Panc1 (cell line): ENCODE measurements at regions of chr1 and their contacts with region 1.

Region 1: DNA sequence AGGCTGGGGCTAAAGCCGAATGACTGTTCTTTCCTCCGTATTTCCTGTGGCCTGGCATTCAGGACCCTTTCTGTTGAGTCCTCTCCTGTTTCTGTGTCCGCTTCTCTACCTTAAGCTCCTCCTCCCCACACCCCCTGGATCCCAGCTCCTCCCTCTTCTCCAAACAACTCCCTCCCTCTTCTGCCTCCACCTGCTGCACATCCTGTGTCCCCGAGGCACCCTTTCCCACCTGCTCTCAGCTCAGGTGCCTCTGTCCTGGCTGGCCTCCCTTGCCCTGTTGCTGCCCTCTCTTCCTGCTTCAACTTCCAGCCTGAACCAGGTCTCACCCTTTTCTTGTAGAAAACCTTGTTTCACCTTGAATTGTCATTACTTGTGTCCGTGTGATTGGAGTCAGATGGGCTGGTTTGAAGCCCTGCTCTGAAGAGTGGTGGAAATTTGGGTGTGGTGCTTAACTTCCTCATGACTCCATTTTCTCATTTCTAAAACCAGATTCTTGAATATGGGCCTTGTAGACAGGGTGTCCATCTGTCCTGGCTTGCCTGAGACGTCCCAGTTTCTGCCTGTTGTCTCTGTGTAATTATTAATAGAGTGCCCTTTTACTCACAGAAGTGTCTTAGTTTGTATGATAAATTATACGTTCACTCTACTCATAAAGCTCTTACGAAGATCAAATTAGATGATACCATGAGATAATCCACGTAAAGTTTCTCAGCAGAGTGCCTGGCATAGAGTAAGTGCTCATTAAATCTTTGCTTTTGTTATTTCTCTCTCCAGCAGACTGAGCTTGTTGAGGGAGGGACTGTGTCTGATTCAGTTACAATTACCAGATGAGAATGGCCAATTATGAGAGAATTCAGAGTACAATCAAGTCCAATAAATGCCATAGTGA is 58.9 kb upstream of the TRABD2B start:
- DNase-seq: no peak
- ATAC-seq: no peak
- H3K4me3 ChIP-seq: no peak overlapping the region
- H3K27ac ChIP-seq: no peak overlapping the region
- H3K4me1 ChIP-seq: no peaks in the 10 kb centered on the region
- H3K27me3 ChIP-seq: no peaks in the 10 kb centered on the region; the same call in 1 of the 2 replicates
- CTCF ChIP-seq: no peak

Region 2: GRCh38 chr1:47997289-47998200 is 58.6 kb before region 1 on chr1 and contains the start of gene TRABD2B:
- CTCF ChIA-PET with region 1: no interaction called
- POLR2A ChIA-PET with region 1: no interaction called
- in situ Hi-C with region 1: no loop called
- intact Hi-C with region 1: loop called (anchors 5 kb)
- DNase-seq: peak; percentile 10
- ATAC-seq: peak; percentile 91
- H3K4me3 ChIP-seq: peak within 1 kb of the TSS; percentile 32 to 51
- H3K27ac ChIP-seq: no peak within 1 kb of the TSS
- H3K4me1 ChIP-seq: no peaks in the 10 kb centered on the region
- H3K27me3 ChIP-seq: peaks cover 17% of the 10 kb centered on the region
- CTCF ChIP-seq: peak; percentile 98
- total RNA-seq, gene TRABD2B: not detected

Region 3: GRCh38 chr1:48082271-48082962 is 26.3 kb after region 1 on chr1:
- CTCF ChIA-PET with region 1: no interaction called
- POLR2A ChIA-PET with region 1: no interaction called
- in situ Hi-C with region 1: no loop called
- intact Hi-C with region 1: no loop called
- DNase-seq: no peak
- ATAC-seq: no peak
- H3K4me3 ChIP-seq: no peak overlapping the region
- H3K27ac ChIP-seq: no peak overlapping the region
- H3K4me1 ChIP-seq: no peaks in the 10 kb centered on the region
- H3K27me3 ChIP-seq: no peaks in the 10 kb centered on the region; the same call in none of the 2 replicates
- CTCF ChIP-seq: no peak